K562 (cell line): ENCODE measurements at regions of chr1 and their contacts with region 1.

Region 1: DNA sequence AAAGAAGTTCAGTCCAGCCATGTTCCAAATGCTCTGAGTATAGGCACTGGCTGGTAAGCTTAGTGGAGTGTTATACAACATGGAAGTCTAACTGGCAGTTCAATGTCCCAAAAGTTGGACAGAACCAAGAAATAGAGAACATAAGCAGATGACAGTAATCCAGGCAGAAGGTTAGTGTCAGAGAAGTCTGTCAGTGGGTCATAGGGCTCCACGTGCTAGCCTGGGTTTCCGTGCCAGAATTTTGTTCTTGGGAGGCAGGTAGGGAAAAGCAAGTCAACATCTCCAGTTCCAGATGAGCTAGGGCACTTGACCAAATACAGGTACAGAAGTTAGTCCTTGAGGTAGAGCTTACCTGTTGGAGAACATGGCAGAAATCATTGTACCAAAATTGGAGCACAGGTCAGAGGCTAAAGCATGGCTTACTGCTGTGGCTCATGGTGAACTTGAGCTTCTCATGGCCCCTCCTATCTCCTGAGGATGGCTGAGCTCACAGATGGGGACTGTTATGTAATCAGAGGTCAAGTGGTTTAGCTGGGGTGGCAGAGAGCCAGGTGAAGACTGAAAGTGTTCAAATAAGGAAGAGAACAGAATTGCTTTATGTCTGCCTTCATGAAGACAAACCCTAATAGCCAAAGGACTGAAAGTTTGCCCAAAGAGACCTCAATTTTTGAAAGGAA is 170.8 kb downstream of the NFIA start:
- DNase-seq: peak; percentile 49 to 93 (median 76)
- ATAC-seq: peak; percentile 94
- H3K4me3 ChIP-seq: no peak overlapping the region
- H3K27ac ChIP-seq: peak overlapping the region; percentile 82
- H3K4me1 ChIP-seq: peaks cover 10 to 30% of the 10 kb centered on the region in 2 experiments
- H3K27me3 ChIP-seq: no peaks in the 10 kb centered on the region
- CTCF ChIP-seq: no peak
- EP300 ChIP-seq: peak; percentile 58
- POLR2A ChIP-seq: peak; percentile 60
- RAD21 ChIP-seq: no peak

Region 2: GRCh38 chr1:61241411-61241838 is 11.8 kb before region 1 on chr1:
- CTCF ChIA-PET with region 1: no interaction called
- POLR2A ChIA-PET with region 1: interaction called, 13 read pairs
- in situ Hi-C with region 1: no loop called
- intact Hi-C with region 1: no loop called
- DNase-seq: no peak
- ATAC-seq: no peak
- H3K4me3 ChIP-seq: no peak overlapping the region
- H3K27ac ChIP-seq: peak overlapping the region; percentile 27; the same call in 1 of the 3 replicates
- H3K4me1 ChIP-seq: peaks cover 0 to 24% of the 10 kb centered on the region in 2 experiments; a peak in 3 of 5 replicates
- H3K27me3 ChIP-seq: no peaks in the 10 kb centered on the region
- CTCF ChIP-seq: no peak
- EP300 ChIP-seq: no peak
- POLR2A ChIP-seq: no peak
- RAD21 ChIP-seq: no peak

Region 3: DNA sequence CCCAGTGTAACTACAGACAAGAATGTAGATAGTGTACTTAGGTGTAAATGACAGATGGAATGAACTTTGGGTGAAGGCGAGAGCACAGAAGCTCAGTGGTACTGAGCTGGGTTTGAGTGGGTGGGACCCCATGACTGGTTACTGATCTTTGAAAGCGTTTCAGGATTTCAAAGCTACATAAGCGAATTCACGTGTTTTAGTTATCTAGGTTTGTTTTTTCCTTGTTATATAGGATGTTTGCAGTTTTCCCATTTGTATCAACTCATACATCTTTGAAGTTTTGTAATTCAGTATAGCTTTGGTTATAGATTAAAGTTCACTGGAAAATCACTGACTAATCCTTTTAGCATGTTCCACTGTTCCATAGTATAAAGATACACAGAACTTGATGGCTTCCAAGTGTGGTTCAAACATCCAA is 11.6 kb after region 1 on chr1:
- CTCF ChIA-PET with region 1: no interaction called
- POLR2A ChIA-PET with region 1: interaction called, 16 read pairs
- in situ Hi-C with region 1: no loop called
- intact Hi-C with region 1: no loop called
- DNase-seq: peak in 2 of 4 experiments; percentile 23 to 55
- ATAC-seq: peak; percentile 71
- H3K4me3 ChIP-seq: no peak overlapping the region
- H3K27ac ChIP-seq: peak overlapping the region; percentile 48; the same call in 2 of the 3 replicates
- H3K4me1 ChIP-seq: peaks cover 4 to 37% of the 10 kb centered on the region in 2 experiments; a peak in 4 of 5 replicates
- H3K27me3 ChIP-seq: no peaks in the 10 kb centered on the region
- CTCF ChIP-seq: no peak
- EP300 ChIP-seq: no peak
- POLR2A ChIP-seq: no peak
- RAD21 ChIP-seq: no peak

Region 4: GRCh38 chr1:61307422-61308142 is 54.4 kb after region 1 on chr1:
- CTCF ChIA-PET with region 1: no interaction called
- POLR2A ChIA-PET with region 1: no interaction called
- in situ Hi-C with region 1: no loop called
- intact Hi-C with region 1: no loop called
- DNase-seq: no peak
- ATAC-seq: no peak
- H3K4me3 ChIP-seq: no peak overlapping the region
- H3K27ac ChIP-seq: no peak overlapping the region
- H3K4me1 ChIP-seq: peaks cover 0 to 6% of the 10 kb centered on the region in 2 experiments; a peak in 2 of 5 replicates
- H3K27me3 ChIP-seq: no peaks in the 10 kb centered on the region
- CTCF ChIP-seq: no peak
- EP300 ChIP-seq: no peak
- POLR2A ChIP-seq: no peak
- RAD21 ChIP-seq: no peak